ENCODE measurements at regions of chr6 and their contacts with region 1.

Region 1: GRCh38 chr6:14734416-14735340 is 511.2 kb upstream of the JARID2 start:
- DNase-seq: peak; percentile 98
- ATAC-seq: peak; percentile 48
- H3K4me3 ChIP-seq: peak overlapping the region; percentile 13; the same call in 1 of the 2 replicates
- H3K27ac ChIP-seq: peak overlapping the region; percentile 99
- H3K4me1 ChIP-seq: peaks cover 51% of the 10 kb centered on the region
- H3K27me3 ChIP-seq: no peaks in the 10 kb centered on the region
- CTCF ChIP-seq: no peak

Region 2: GRCh38 chr6:14542670-14543366 is 191.9 kb before region 1 on chr6:
- CTCF ChIA-PET with region 1: no interaction called
- POLR2A ChIA-PET with region 1: no interaction called
- intact Hi-C with region 1: loop called (anchors 5 kb)
- DNase-seq: peak; percentile 64
- ATAC-seq: peak; percentile 31; the same call in 1 of the 2 replicates
- H3K4me3 ChIP-seq: no peak overlapping the region
- H3K27ac ChIP-seq: no peak overlapping the region
- H3K4me1 ChIP-seq: peaks cover 29% of the 10 kb centered on the region
- H3K27me3 ChIP-seq: no peaks in the 10 kb centered on the region
- CTCF ChIP-seq: no peak

Region 3: GRCh38 chr6:14681699-14682487 is 52.8 kb before region 1 on chr6:
- CTCF ChIA-PET with region 1: no interaction called
- POLR2A ChIA-PET with region 1: interaction called, 10 read pairs
- intact Hi-C with region 1: no loop called
- DNase-seq: no peak
- ATAC-seq: no peak
- H3K4me3 ChIP-seq: no peak overlapping the region
- H3K27ac ChIP-seq: no peak overlapping the region
- H3K4me1 ChIP-seq: peaks cover 9% of the 10 kb centered on the region
- H3K27me3 ChIP-seq: no peaks in the 10 kb centered on the region
- CTCF ChIP-seq: no peak

Region 4: GRCh38 chr6:14889191-14889590 is 154.5 kb after region 1 on chr6:
- CTCF ChIA-PET with region 1: no interaction called
- POLR2A ChIA-PET with region 1: no interaction called
- intact Hi-C with region 1: loop called (anchors 1 kb)
- DNase-seq: peak; percentile 81
- ATAC-seq: peak; percentile 78
- H3K4me3 ChIP-seq: peak overlapping the region; percentile 3; the same call in 1 of the 2 replicates
- H3K27ac ChIP-seq: peak overlapping the region; percentile 83
- H3K4me1 ChIP-seq: peaks cover 14% of the 10 kb centered on the region
- H3K27me3 ChIP-seq: no peaks in the 10 kb centered on the region
- CTCF ChIP-seq: no peak

Region 5: DNA sequence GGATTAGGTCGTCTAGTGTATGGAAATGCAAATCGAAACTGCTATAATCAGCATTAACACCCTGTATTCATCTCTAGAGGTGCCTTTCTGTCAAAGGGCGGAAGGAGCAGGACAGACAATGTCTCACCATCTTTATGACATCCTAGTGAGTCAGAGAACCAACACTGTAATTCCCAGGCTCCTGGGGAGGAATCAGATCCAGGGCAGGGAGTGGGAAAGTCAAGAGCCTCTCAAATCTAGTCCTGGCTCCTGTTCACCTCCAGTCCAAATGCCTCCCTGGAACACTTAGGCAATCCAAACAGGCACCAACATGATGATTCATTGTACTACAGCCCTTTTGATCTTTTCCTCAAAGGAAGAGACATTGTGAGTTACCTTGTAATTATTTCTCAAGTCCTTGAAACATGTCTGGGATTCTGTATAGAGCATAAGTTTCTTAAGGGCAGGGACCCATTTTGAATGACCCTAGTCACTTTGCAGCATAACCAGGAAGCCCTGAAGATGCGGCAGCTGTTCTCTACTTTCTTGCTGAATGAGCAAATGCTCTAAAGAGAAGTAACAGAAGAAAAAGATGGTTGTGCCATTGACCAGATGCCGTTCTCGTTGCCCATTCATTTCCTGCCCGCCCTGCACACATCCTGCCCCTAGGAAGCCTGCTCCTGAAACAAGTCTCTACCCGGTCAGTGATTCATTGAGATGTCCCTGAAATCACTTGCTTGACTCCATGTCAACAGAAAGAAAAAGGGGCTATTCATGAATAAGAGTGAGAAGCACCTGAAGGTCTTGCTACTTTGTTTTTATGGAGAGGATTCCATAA is 398.4 kb after region 1 on chr6:
- CTCF ChIA-PET with region 1: no interaction called
- POLR2A ChIA-PET with region 1: no interaction called
- intact Hi-C with region 1: loop called (anchors 2 kb)
- DNase-seq: peak; percentile 97
- ATAC-seq: peak; percentile 98
- H3K4me3 ChIP-seq: peak overlapping the region; percentile 24; the same call in 1 of the 2 replicates
- H3K27ac ChIP-seq: peak overlapping the region; percentile 92
- H3K4me1 ChIP-seq: peaks cover 23% of the 10 kb centered on the region
- H3K27me3 ChIP-seq: no peaks in the 10 kb centered on the region
- CTCF ChIP-seq: no peak